Tibial artery (tissue), 4 donors: ENCODE measurements at regions of chr17 and their contacts with region 1.

Region 1: DNA sequence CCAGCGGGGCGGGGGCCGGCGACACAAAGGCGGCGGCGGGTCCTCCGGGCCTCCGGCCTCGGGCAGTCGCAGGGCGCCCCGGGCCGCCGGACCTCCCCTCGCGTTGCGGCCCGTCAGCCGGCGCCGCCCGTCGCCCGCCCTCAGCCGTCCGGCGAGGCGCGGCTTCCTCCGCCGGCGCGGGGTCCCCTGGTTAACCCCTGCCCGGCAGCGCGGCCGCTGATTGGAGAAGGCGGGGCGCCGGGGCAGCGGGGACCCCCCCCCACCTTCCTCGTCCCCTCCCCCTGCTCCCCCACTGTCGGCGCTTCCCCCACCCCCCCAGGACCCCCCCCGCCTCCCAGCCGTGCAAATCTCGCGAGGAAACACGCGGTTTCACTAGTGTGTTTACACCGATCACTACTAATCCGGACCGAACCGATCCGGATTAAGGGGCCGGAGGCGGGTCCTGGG is at the start of gene TLK2:
- DNase-seq: peak; percentile 58 to 84
- H3K4me3 ChIP-seq: peak within 1 kb of the TSS; percentile 87 to 94
- H3K27ac ChIP-seq: peak within 1 kb of the TSS; percentile 96 to 97
- H3K4me1 ChIP-seq: peaks cover 0 to 44% (median 16%) of the 10 kb centered on the region in 4 donors
- H3K27me3 ChIP-seq: no peaks in the 10 kb centered on the region
- CTCF ChIP-seq: no peak

Region 2: GRCh38 chr17:62539783-62540182 is 61.3 kb after region 1 on chr17:
- intact Hi-C with region 1: loop called (anchors 5 kb)
- DNase-seq: no peak
- H3K4me3 ChIP-seq: no peak overlapping the region
- H3K27ac ChIP-seq: no peak overlapping the region
- H3K4me1 ChIP-seq: no peaks in the 10 kb centered on the region
- H3K27me3 ChIP-seq: no peaks in the 10 kb centered on the region
- CTCF ChIP-seq: no peak